Esophagus squamous epithelium (tissue), 5 donors: ENCODE measurements at regions of chr16 and their contacts with region 1.

Region 1: DNA sequence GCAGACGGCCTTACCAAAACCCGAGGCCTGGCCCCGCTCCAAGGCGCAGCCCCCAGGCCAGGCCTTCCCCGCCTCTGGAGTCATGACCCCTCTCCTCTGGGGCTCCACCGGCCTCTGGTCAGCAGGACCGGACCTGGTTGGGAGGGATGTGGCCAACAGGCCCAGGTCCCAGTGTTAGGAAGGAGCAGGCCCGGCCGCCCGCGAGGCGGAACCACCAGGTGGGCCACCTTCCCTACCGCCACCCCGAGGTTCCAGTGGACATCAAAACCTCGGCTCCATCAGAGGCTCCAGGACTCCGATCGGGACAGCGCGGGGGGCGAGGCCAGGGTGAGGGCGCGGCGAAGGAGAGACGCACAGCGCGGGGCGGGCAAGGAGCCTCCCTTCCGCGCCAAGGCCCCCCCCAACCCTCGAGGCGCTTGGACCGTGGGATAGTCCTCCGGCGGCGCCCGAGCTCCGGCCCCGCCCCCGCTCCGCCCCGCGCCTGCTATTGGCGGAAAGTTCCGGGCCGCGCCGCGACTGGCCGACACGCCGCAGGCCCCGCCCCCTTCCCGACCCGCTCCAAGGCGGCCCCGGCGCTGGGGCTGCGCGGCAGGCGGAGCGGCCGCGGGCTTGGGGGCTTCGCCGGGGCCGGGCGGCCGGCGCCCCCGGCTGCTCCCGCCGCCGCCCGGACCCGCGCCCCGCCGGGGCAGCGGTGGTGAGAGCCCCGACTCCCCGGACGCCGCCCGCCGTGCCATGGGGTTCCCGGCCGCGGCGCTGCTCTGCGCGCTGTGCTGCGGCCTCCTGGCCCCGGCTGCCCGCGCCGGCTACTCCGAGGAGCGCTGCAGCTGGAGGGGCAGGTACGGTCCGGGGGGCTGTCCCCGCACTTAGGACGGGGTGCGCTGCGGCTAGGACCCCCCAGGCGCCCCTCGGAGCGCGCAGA is at the start of gene METRN:
- DNase-seq: no peak
- H3K4me3 ChIP-seq: peak within 1 kb of the TSS; percentile 52 to 87 (median 62)
- H3K27ac ChIP-seq: peak within 1 kb of the TSS in 2 of 4 donors; percentile 36 to 61
- H3K4me1 ChIP-seq: peaks cover 23 to 74% (median 25%) of the 10 kb centered on the region in 3 donors
- H3K27me3 ChIP-seq: peaks cover 6 to 67% (median 18%) of the 10 kb centered on the region in 4 donors
- CTCF ChIP-seq: no peak
- POLR2A ChIP-seq: peak in 1 of 4 donors; percentile 7
- total RNA-seq, gene METRN: 4.2 to 12.7 (median 8.8) TPM

Region 2: GRCh38 chr16:525520-526180 is 189.2 kb before region 1 on chr16:
- intact Hi-C with region 1: no loop called
- DNase-seq: no peak
- H3K4me3 ChIP-seq: peak overlapping the region; percentile 58 to 90 (median 78)
- H3K27ac ChIP-seq: peak overlapping the region; percentile 97 to 99 (median 98)
- H3K4me1 ChIP-seq: peaks cover 36 to 75% (median 40%) of the 10 kb centered on the region in 3 donors
- H3K27me3 ChIP-seq: no peaks in the 10 kb centered on the region
- CTCF ChIP-seq: no peak
- POLR2A ChIP-seq: peak in 1 of 4 donors; percentile 23

Region 3: DNA sequence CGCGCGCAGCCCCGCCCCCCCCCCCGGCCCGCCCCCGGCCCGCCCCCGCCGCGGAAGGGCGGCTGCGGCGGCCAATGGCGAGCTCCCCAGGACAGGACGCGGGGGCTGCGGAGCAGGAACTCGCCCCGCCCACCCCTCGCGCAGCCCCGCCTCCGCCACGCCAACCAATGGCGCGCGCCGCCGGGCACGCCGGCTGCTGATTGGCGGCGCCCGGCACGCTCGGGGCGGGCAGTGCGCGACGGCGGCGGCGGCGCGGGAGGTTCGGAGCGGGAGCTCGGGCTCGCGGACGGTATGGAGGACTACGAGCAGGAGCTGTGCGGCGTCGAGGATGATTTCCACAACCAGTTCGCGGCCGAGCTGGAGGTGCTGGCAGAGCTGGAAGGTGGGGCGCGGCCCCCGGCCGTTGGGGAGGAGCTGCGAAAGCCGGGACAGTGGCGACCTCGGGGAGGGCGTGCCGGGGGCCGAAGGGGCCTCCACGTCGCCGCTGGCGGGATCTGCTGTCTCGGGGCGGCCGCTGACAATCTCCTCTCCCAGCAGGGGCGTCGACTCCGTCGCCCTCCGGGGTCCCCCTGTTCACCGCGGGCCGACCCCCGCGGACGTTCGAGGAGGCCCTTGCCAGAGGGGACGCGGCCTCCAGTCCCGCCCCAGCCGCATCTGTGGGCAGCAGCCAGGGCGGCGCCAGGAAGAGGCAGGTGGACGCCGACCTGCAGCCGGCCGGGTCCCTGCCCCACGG is 73.7 kb after region 1 on chr16 and contains the start of gene CHTF18:
- intact Hi-C with region 1: loop called (anchors 5 kb)
- DNase-seq: peak; percentile 27
- H3K4me3 ChIP-seq: peak within 1 kb of the TSS; percentile 80 to 99 (median 93)
- H3K27ac ChIP-seq: peak within 1 kb of the TSS; percentile 78 to 90 (median 84)
- H3K4me1 ChIP-seq: peaks cover 24 to 48% (median 26%) of the 10 kb centered on the region in 3 donors
- H3K27me3 ChIP-seq: peaks cover 0 to under 1% (median 0%) of the 10 kb centered on the region in 4 donors
- CTCF ChIP-seq: no peak
- POLR2A ChIP-seq: no peak
- total RNA-seq, gene CHTF18: 5.0 to 17.8 (median 7.3) TPM

Region 4: DNA sequence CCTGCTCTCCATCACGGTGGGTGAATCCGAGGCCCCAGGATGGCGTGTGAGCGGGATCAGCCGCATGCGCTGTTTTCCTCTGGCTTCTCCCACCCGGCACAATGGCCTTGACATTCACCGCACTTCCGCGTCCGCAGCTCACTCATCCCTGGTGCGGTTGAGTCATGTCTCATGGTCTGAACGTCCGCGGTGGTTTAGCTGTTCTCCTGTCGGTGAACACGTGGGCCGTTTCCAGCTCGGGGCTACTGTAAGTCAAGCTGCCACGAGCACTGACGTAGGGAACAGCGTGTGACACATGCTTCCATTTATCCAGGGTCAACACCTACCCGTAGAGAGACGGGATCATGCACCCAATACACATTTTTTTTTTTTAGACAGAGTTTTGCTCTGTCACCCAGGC is 422.8 kb after region 1 on chr16:
- intact Hi-C with region 1: no loop called
- DNase-seq: no peak
- H3K4me3 ChIP-seq: no peak overlapping the region
- H3K27ac ChIP-seq: no peak overlapping the region
- H3K4me1 ChIP-seq: no peaks in the 10 kb centered on the region
- H3K27me3 ChIP-seq: peaks cover 0 to 47% (median 0%) of the 10 kb centered on the region in 4 donors
- CTCF ChIP-seq: no peak
- POLR2A ChIP-seq: no peak